ENCODE measurements at regions of chr4 and their contacts with region 1.

Region 1: DNA sequence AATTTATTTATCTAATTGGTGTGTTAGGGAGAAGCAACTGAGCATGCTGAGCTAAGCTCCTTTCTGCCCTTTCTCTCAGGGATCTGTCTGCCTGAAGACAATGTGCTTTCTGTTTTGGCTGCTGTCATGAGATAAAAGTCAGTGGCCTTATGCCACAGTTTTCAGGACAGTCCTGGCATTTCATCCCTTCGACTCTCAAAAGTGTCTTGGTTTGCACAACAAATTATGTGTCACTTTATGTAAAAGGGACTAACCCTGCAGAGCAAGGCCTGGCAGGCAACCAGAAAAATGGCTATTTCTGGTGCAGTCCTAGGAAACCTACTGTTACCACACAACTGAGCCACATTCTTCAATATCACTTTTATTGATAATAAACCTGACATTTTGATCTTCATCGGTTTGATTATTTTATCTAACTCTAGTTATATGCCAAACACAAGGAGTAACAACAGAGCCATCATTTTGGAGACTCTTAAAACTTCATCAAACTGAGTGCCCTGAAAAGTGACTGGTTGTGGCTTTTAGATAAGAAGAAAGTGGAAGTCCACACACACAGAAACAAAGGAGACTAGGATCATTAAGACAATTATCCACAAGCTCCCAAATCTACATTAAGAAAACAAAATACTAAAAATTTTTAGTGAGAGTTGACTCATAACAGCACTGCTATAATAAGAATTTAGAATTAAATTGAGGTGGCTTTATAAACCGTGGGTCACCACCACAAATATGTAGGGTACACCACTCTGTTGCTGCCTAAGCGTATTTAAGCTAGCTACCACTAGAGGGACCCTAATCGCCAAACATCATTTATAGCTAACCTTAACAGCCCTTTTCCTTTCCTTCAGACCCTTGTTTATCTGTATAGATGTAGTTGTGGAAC is 95.9 kb upstream of the PTPN13 start:
- DNase-seq: no peak
- ATAC-seq: peak; percentile 61 to 78 (median 72)
- H3K4me3 ChIP-seq: no peak overlapping the region
- H3K27ac ChIP-seq: no peak overlapping the region
- H3K4me1 ChIP-seq: peaks cover 28% of the 10 kb centered on the region
- H3K27me3 ChIP-seq: no peaks in the 10 kb centered on the region
- CTCF ChIP-seq: peak; percentile 80

Region 2: GRCh38 chr4:86895692-86896488 is 397.7 kb after region 1 on chr4:
- intact Hi-C with region 1: loop called (anchors 2 kb)
- DNase-seq: no peak
- ATAC-seq: peak; percentile 46 to 75 (median 56)
- H3K4me3 ChIP-seq: no peak overlapping the region
- H3K27ac ChIP-seq: no peak overlapping the region
- H3K4me1 ChIP-seq: peaks cover 11% of the 10 kb centered on the region
- H3K27me3 ChIP-seq: no peaks in the 10 kb centered on the region
- CTCF ChIP-seq: peak; percentile 81

Region 3: DNA sequence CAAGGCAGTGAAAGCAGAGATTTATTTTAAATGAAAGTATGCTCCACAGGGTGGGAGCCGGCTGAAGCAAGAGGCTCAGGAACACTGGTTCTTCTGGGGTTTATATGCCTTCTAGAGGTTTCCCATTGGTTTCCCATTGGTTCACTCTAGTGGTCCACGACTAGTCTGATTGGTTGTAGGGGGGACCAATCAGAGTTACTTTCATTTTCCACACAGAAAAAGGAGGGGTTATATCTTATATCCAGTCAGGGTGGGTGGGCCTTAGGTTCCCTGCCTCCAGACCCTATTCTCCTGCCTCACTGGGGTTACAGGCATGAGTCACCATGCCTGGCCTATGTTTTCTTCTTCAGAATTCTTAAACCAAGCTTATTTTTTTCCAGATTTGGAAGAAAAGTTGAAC is 620.6 kb after region 1 on chr4:
- intact Hi-C with region 1: loop called in 1 of 2 experiments (anchors 10 kb)
- DNase-seq: no peak
- ATAC-seq: no peak
- H3K4me3 ChIP-seq: peak overlapping the region; percentile 60
- H3K27ac ChIP-seq: peak overlapping the region; percentile 87
- H3K4me1 ChIP-seq: peaks cover 76% of the 10 kb centered on the region
- H3K27me3 ChIP-seq: no peaks in the 10 kb centered on the region
- CTCF ChIP-seq: no peak